Activated CD8-positive, alpha-beta T cell treated with anti-CD3 and anti-CD28 coated beads for 36 hours (primary cell): ENCODE measurements at regions of chr1 and their contacts with region 1.

Region 1: GRCh38 chr1:154558575-154559465 is at the start of gene UBE2Q1:
- DNase-seq: peak; percentile 100
- ATAC-seq: peak; percentile 92
- H3K4me3 Mint-ChIP-seq: peak within 1 kb of the TSS; percentile 95
- H3K27ac Mint-ChIP-seq: peak within 1 kb of the TSS; percentile 96
- H3K4me1 Mint-ChIP-seq: peaks cover 23% of the 10 kb centered on the region
- H3K27me3 Mint-ChIP-seq: no peaks in the 10 kb centered on the region
- CTCF ChIP-seq: no peak
- total RNA-seq, gene UBE2Q1: 71.2 to 74.6 TPM

Region 2: DNA sequence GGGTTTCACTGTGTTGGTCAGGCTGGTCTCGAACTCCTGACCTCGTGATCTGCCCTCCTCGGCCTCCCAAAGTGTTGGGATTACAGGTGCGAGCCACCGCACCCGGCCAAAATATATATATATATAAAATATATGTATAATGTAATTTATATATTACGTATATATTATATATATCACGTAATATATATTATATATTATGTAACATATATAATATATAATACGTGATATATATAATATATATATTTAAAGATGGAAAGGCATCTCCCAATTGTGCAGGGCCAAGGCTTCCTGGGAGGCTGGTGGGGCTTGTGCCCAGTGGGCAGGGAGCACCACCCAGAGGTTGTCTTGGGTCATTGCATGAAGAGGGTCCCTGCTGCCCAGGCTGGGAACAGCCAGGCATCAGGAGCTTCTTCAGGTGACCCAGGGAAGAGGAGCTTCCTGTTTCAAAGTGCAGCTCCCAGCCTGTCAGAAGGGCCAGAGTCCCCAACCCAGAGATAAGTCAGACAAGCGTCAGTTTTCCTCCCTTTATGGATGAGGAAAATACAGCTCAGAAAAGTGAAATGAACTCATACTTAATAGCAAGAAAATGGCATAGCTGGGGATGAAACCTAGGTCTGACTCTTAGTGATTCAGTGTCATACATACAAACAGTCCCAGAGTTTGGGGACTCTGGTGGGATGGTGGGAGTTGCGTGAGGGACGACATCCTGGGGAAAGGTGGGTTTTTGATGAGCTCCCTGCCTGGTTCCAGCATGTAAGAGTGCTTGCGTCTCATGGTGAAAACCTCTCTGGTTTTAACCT is 12.4 kb before region 1 on chr1:
- CTCF ChIA-PET with region 1: interaction called, 24 read pairs
- POLR2A ChIA-PET with region 1: interaction called, 3 read pairs
- intact Hi-C with region 1: no loop called
- DNase-seq: peak; percentile 72
- ATAC-seq: peak; percentile 98
- H3K4me3 Mint-ChIP-seq: no peak overlapping the region
- H3K27ac Mint-ChIP-seq: no peak overlapping the region
- H3K4me1 Mint-ChIP-seq: peaks cover 12% of the 10 kb centered on the region
- H3K27me3 Mint-ChIP-seq: no peaks in the 10 kb centered on the region
- CTCF ChIP-seq: peak; percentile 79

Region 3: DNA sequence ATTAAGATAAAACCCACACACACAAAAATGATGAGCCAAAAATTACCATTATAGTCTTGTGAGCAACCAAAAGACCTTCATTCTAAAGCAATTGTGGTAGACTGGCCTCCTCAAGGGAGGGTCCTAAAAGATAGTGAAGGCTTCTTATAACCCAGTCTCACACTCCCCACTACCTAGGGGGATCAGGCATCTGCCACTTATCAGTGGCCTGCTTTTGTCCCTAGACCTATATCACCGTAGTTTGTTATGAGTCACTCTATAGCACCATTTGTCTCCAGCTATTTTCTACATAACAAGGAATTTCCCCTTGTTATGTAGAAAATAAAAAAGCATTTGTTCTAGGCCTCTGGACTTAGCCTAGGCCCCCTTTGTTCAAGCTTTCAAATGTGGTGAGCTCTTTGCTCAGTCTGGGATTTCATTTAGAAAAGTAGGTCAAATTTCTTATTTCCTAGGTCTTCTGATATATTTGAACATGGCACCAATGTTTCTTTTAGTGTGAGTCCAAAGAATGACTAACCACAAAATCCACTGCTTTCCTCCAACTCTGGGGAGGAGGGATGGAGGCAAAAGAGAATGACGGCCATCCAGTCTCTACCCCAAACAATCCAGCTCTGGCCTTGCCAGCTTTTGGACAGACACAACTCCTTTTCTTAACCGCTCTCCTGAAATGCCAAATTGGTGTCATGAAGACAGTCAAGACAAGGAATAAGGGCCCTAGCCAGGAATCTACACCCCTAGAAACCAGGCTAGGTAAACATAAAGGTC is 40.2 kb after region 1 on chr1:
- CTCF ChIA-PET with region 1: interaction called, 12 read pairs
- POLR2A ChIA-PET with region 1: no interaction called
- intact Hi-C with region 1: no loop called
- DNase-seq: no peak
- ATAC-seq: no peak
- H3K4me3 Mint-ChIP-seq: no peak overlapping the region
- H3K27ac Mint-ChIP-seq: peak overlapping the region; percentile 76
- H3K4me1 Mint-ChIP-seq: peaks cover 46% of the 10 kb centered on the region
- H3K27me3 Mint-ChIP-seq: no peaks in the 10 kb centered on the region
- CTCF ChIP-seq: no peak

Region 4: DNA sequence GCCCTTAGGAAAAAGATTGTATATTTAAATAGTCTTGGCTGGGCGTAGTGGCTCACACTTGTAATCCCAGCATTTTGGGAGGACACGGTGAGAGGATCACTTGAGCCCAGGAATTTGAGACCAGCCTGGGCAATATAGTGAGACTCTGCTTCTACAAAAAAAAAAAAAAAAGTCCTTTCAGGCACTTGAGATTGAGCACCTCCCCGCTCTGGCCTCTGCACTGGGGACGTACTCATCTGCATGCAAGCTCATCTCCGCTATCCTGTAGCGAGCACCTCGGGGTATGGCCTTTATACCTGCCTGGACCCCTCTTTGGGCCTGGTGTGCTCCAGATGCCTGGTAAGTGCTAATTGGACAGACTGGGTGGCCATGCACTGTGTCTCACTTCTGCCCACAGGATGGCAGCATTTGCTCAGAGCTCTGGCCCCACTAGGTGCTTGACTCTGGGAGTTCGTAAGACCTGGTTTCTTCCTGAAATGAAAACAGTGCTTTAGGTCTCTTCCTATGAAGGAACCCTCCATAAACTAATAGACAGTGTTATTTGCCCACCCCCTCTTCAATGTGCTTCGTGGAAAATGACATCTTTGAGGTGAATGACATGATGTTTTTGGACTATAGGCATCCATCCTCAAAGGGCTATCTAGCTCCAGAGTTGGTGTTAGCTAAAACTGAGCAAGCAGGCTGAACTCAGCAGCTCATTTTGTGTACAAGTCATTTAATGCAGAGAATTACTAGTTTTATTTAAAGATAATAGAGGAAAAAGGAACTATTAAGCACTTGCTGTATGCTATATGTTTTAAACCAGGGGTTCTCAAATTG is 110.9 kb after region 1 on chr1:
- CTCF ChIA-PET with region 1: interaction called, 16 read pairs
- POLR2A ChIA-PET with region 1: no interaction called
- intact Hi-C with region 1: no loop called
- DNase-seq: peak; percentile 88
- ATAC-seq: peak; percentile 100
- H3K4me3 Mint-ChIP-seq: no peak overlapping the region
- H3K27ac Mint-ChIP-seq: no peak overlapping the region
- H3K4me1 Mint-ChIP-seq: peaks cover 11% of the 10 kb centered on the region
- H3K27me3 Mint-ChIP-seq: no peaks in the 10 kb centered on the region
- CTCF ChIP-seq: peak; percentile 78

Region 5: GRCh38 chr1:154760469-154760933 is 201.7 kb after region 1 on chr1:
- CTCF ChIA-PET with region 1: interaction called, 15 read pairs
- POLR2A ChIA-PET with region 1: interaction called, 6 read pairs
- intact Hi-C with region 1: loop called (anchors 2 kb)
- DNase-seq: peak; percentile 85
- ATAC-seq: peak; percentile 61
- H3K4me3 Mint-ChIP-seq: peak overlapping the region; percentile 64
- H3K27ac Mint-ChIP-seq: peak overlapping the region; percentile 96
- H3K4me1 Mint-ChIP-seq: peaks cover 55% of the 10 kb centered on the region
- H3K27me3 Mint-ChIP-seq: no peaks in the 10 kb centered on the region
- CTCF ChIP-seq: peak; percentile 93

Region 6: GRCh38 chr1:154878371-154879022 is 319.7 kb after region 1 on chr1:
- CTCF ChIA-PET with region 1: interaction called, 18 read pairs
- POLR2A ChIA-PET with region 1: no interaction called
- intact Hi-C with region 1: loop called (anchors 10 kb)
- DNase-seq: peak; percentile 84
- ATAC-seq: peak; percentile 99
- H3K4me3 Mint-ChIP-seq: no peak overlapping the region
- H3K27ac Mint-ChIP-seq: no peak overlapping the region
- H3K4me1 Mint-ChIP-seq: peaks cover 4% of the 10 kb centered on the region
- H3K27me3 Mint-ChIP-seq: peaks cover 1% of the 10 kb centered on the region
- CTCF ChIP-seq: peak; percentile 84